ENCODE measurements at regions of chr4 and their contacts with region 1.

Region 1: GRCh38 chr4:83569987-83570386 is 34.1 kb downstream of the GPAT3 start:
- DNase-seq: no peak
- ATAC-seq: peak; percentile 95
- H3K4me3 Mint-ChIP-seq: no peak overlapping the region
- H3K27ac Mint-ChIP-seq: no peak overlapping the region
- H3K4me1 Mint-ChIP-seq: peaks cover 16% of the 10 kb centered on the region
- H3K27me3 Mint-ChIP-seq: no peaks in the 10 kb centered on the region
- CTCF ChIP-seq: no peak

Region 2: GRCh38 chr4:83556006-83556707 is 13.8 kb before region 1 on chr4:
- CTCF ChIA-PET with region 1: no interaction called
- POLR2A ChIA-PET with region 1: no interaction called
- intact Hi-C with region 1: loop called (anchors 2 kb)
- DNase-seq: no peak
- ATAC-seq: no peak
- H3K4me3 Mint-ChIP-seq: no peak overlapping the region
- H3K27ac Mint-ChIP-seq: no peak overlapping the region
- H3K4me1 Mint-ChIP-seq: peaks cover 6% of the 10 kb centered on the region
- H3K27me3 Mint-ChIP-seq: no peaks in the 10 kb centered on the region
- CTCF ChIP-seq: no peak

Measured in activated B cell treated with CpG ODN at 0.5 μM for 24 hours (primary cell).